Panc1 (cell line): ENCODE measurements at regions of chr22 and their contacts with region 1.

Region 1: GRCh38 chr22:29706486-29706885 is 13.3 kb upstream of the CABP7 start:
- DNase-seq: no peak
- ATAC-seq: no peak
- H3K4me3 ChIP-seq: no peak overlapping the region
- H3K27ac ChIP-seq: no peak overlapping the region
- H3K4me1 ChIP-seq: peaks cover 40% of the 10 kb centered on the region
- H3K27me3 ChIP-seq: no peaks in the 10 kb centered on the region
- CTCF ChIP-seq: no peak

Region 2: GRCh38 chr22:29584975-29585374 is 121.5 kb before region 1 on chr22:
- CTCF ChIA-PET with region 1: no interaction called
- POLR2A ChIA-PET with region 1: interaction called, 12 read pairs
- in situ Hi-C with region 1: no loop called
- intact Hi-C with region 1: no loop called
- DNase-seq: no peak
- ATAC-seq: no peak
- H3K4me3 ChIP-seq: no peak overlapping the region
- H3K27ac ChIP-seq: no peak overlapping the region
- H3K4me1 ChIP-seq: peaks cover 10% of the 10 kb centered on the region; the same call in 1 of the 2 replicates
- H3K27me3 ChIP-seq: no peaks in the 10 kb centered on the region
- CTCF ChIP-seq: no peak

Region 3: GRCh38 chr22:29830585-29830984 is 124.1 kb after region 1 on chr22:
- CTCF ChIA-PET with region 1: no interaction called
- POLR2A ChIA-PET with region 1: no interaction called
- in situ Hi-C with region 1: no loop called
- intact Hi-C with region 1: no loop called
- DNase-seq: no peak
- ATAC-seq: no peak
- H3K4me3 ChIP-seq: no peak overlapping the region
- H3K27ac ChIP-seq: no peak overlapping the region
- H3K4me1 ChIP-seq: no peaks in the 10 kb centered on the region
- H3K27me3 ChIP-seq: no peaks in the 10 kb centered on the region
- CTCF ChIP-seq: no peak